A549 (cell line): ENCODE measurements at regions of chr3 and their contacts with region 1.

Region 1: GRCh38 chr3:64224826-64225610 is at the start of gene PRICKLE2:
- DNase-seq: peak; percentile 69 to 90
- ATAC-seq: peak; percentile 88 to 92
- H3K4me3 ChIP-seq: peak within 1 kb of the TSS; percentile 70
- H3K27ac ChIP-seq: peak within 1 kb of the TSS; percentile 91 to 93
- H3K4me1 ChIP-seq: peaks cover 33% of the 10 kb centered on the region
- CTCF ChIP-seq: peak; percentile 37
- EP300 ChIP-seq: no peak
- POLR2A ChIP-seq: peak; percentile 19; the same call in 1 of the 2 replicates
- RAD21 ChIP-seq: peak; percentile 54 to 64
- polyA plus RNA-seq, gene PRICKLE2: 6.3 and 8.0 TPM in 2 replicates

Region 2: DNA sequence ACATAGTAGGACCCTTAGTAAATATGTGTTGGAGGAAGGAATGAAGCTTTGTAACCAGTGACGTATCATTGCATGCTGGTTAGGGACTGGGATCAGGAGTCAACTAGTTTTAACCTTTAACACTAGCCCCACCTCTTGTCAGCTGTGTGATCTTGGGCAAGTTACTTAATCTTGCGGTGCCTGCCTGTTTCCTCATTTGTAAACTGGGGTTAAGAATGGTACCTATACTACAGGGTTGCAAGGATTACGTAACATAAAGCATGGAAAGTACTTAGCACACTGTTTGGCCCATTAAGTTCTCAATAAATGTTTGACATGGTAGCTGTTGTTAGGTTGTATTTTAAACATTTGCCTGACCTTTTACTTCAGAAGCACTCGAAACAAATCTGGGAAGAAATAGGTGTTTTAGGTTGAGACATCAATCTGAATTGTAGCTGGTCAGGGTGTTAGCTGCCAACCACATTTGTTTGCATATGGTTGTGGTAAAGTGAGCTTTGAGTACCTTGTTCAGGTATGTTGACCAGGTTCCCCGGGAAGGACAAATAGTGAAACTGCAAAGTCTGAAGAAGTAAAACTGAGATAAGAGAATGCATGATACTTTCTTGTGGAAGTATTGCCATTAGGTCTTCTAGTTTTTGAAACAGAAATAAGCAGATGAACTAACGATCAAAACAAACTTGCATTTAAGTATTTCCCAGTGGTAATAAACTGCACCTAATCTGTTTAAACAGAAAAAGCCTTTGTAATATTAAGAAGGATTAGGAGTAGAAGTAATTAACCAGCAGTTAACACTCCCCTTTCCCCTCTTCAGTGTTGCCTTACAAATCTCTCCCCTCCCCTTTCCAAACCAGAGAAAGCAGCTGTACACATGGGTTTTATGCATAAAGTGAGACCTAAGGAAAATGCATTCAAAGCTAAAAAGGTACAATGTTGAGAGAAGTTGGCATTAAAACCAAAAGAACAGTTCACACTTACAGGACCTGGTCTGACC is 287.1 kb before region 1 on chr3:
- CTCF ChIA-PET with region 1: no interaction called
- POLR2A ChIA-PET with region 1: no interaction called
- DNase-seq: no peak
- ATAC-seq: no peak
- H3K4me3 ChIP-seq: no peak overlapping the region
- H3K27ac ChIP-seq: no peak overlapping the region
- H3K4me1 ChIP-seq: peaks cover 16% of the 10 kb centered on the region; the same call in 2 of the 3 replicates
- CTCF ChIP-seq: no peak
- EP300 ChIP-seq: no peak
- POLR2A ChIP-seq: no peak
- RAD21 ChIP-seq: no peak

Region 3: DNA sequence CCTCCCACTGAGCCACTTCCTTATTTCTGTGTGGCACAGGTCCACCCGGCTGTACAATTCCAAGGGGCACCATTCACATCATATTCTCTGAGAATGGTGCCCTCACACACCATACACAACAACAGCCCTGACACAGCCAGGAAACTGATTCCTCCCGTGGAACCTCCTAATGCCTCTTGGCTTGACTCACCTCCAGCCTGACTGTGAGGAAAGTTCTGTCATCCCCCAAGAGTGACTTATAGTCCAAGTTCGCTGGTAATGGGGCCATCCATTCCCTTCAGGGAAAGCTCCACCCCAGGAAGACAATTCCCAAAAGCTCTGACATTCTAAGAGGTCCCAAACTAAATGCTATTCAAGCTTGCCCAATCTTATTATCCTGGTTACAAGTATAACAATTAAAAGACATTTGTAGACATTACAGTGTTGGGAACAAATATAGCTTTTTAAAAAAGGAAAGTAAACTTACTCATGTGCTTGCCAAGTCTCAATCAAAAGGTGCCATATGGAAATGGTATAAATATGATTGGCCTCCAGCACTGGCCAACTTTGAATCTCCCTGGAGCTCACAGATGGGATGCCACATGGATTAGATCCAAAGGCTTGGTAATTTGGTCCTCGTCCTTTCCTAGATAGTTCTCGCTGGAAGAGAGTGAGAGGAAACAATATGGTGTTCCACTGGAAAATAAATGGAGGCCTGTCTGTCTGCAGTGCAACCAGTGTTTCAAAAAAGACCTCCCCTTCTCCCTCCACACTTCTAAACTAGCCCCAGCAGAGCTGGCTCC is 145.5 kb before region 1 on chr3:
- CTCF ChIA-PET with region 1: no interaction called
- POLR2A ChIA-PET with region 1: no interaction called
- DNase-seq: no peak
- ATAC-seq: no peak
- H3K4me3 ChIP-seq: no peak overlapping the region
- H3K27ac ChIP-seq: peak overlapping the region; percentile 21 to 93; a peak in 3 of 6 replicates
- H3K4me1 ChIP-seq: peaks cover 23% of the 10 kb centered on the region
- CTCF ChIP-seq: no peak
- EP300 ChIP-seq: no peak
- POLR2A ChIP-seq: no peak
- RAD21 ChIP-seq: no peak

Region 4: GRCh38 chr3:64109438-64109837 is 115.6 kb before region 1 on chr3:
- CTCF ChIA-PET with region 1: no interaction called
- POLR2A ChIA-PET with region 1: no interaction called
- DNase-seq: peak in 1 of 2 experiments; percentile 9
- ATAC-seq: no peak
- H3K4me3 ChIP-seq: no peak overlapping the region
- H3K27ac ChIP-seq: peak overlapping the region in 1 of 2 experiments; percentile 63; a peak in 3 of 6 replicates
- H3K4me1 ChIP-seq: peaks cover 33% of the 10 kb centered on the region
- CTCF ChIP-seq: no peak
- EP300 ChIP-seq: no peak
- POLR2A ChIP-seq: no peak
- RAD21 ChIP-seq: no peak

Region 5: DNA sequence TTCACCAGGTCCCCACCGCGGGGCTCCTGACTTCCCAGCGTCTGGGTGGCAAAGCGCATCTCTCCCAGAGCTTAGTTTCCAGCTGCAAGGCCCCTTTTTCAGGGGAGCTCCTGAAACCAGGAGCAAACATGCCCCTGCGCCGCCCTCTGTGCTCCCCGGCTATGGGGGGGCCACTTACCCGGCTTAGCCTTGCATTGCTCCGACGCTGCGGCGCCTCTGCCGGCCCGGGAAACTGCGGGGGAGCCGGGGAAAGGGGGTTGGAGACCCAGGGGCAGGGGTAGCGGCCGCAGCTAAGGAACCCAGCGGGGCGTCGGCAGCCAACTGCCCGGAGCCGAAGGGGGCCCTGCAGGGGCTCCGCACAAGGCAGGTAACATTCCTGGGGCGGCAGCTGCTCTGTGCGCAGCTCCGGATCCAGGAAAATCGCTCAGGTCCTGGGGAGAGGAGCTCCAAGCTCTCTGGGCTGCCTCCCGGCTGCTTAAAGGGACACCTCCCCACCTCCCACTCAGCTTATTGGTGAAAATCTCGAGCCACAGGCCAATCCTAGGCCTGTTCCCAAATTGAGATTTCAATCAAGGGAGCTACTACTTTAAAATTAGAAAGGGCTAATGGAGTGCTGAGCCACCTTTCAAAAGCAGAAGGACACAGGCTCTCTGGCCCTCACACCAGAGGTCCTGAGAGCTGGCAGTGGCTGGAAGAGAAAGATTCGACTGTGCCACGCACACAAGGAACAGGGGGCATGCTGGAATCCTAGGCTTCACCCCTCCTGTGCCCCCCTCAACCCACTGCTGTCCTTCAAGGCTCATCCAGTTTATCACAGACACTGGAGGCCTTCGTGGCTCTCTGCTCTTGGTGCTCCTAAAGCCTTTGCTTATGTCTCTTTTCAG is 42.9 kb after region 1 on chr3:
- CTCF ChIA-PET with region 1: interaction called, 11 read pairs
- POLR2A ChIA-PET with region 1: interaction called, 14 read pairs
- DNase-seq: no peak
- ATAC-seq: no peak
- H3K4me3 ChIP-seq: no peak overlapping the region
- H3K27ac ChIP-seq: peak overlapping the region; percentile 83 to 91; a peak in 5 of 6 replicates
- H3K4me1 ChIP-seq: peaks cover 41% of the 10 kb centered on the region
- CTCF ChIP-seq: no peak
- EP300 ChIP-seq: no peak
- POLR2A ChIP-seq: no peak
- RAD21 ChIP-seq: no peak

Region 6: DNA sequence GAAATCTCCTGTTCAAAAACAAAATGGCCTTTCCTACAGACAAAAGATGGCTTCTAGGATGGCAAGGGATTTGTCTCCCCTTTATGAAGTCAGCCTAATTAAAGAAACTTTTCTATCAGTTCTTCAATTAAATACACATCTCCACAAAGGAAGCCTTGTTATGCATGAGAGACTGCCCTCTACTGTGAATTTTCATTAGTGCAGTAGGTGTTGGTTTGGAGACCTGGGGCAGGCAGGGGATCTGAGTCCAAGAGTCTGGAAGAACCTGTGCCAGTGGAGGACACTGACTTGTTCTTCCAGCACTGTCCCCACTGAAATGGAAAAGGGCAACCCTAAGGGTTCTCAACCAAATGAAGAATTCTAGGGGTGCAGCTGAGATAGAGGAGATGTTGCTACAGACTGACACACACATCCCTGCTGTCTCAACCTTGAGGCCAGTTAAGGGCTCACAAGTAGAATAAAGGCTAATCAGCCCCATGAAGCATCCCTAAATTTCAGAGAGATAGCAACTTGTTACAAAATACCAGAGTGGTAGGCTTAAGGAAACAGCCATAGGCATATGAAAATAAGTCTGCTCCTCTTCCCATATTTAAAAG is 174.3 kb after region 1 on chr3:
- CTCF ChIA-PET with region 1: interaction called, 18 read pairs
- POLR2A ChIA-PET with region 1: interaction called, 3 read pairs
- DNase-seq: peak; percentile 35 to 54
- ATAC-seq: peak; percentile 70 to 85; a peak in 4 of 6 replicates
- H3K4me3 ChIP-seq: no peak overlapping the region
- H3K27ac ChIP-seq: peak overlapping the region; percentile 55 to 72; a peak in 4 of 6 replicates
- H3K4me1 ChIP-seq: peaks cover 12% of the 10 kb centered on the region; the same call in 2 of the 3 replicates
- CTCF ChIP-seq: peak; percentile 69
- EP300 ChIP-seq: no peak
- POLR2A ChIP-seq: no peak
- RAD21 ChIP-seq: peak; percentile 81 to 83